ENCODE measurements at regions of chr2 and their contacts with region 1.

Region 1: GRCh38 chr2:223580951-223581350 is 21.2 kb downstream of the SCG2 start:
- DNase-seq: no peak
- ATAC-seq: no peak
- H3K4me3 ChIP-seq: no peak overlapping the region
- H3K27ac ChIP-seq: no peak overlapping the region
- H3K4me1 ChIP-seq: no peaks in the 10 kb centered on the region
- H3K27me3 ChIP-seq: no peaks in the 10 kb centered on the region
- CTCF ChIP-seq: no peak
- EP300 ChIP-seq: no peak
- POLR2A ChIP-seq: no peak
- RAD21 ChIP-seq: no peak

Region 2: GRCh38 chr2:223508372-223508771 is 72.6 kb before region 1 on chr2:
- CTCF ChIA-PET with region 1: no interaction called
- POLR2A ChIA-PET with region 1: no interaction called
- in situ Hi-C with region 1: no loop called
- intact Hi-C with region 1: no loop called
- DNase-seq: no peak
- ATAC-seq: no peak
- H3K4me3 ChIP-seq: no peak overlapping the region
- H3K27ac ChIP-seq: no peak overlapping the region
- H3K4me1 ChIP-seq: no peaks in the 10 kb centered on the region
- H3K27me3 ChIP-seq: 0 out of 5 replicates have a peak, but pooled peaks cover 0 to 4% of the 10 kb centered on the region in 2 experiments
- CTCF ChIP-seq: no peak
- EP300 ChIP-seq: no peak
- POLR2A ChIP-seq: no peak
- RAD21 ChIP-seq: no peak

Region 3: GRCh38 chr2:224869601-224870233 is 1288.8 kb after region 1 on chr2:
- CTCF ChIA-PET with region 1: no interaction called
- POLR2A ChIA-PET with region 1: no interaction called
- in situ Hi-C with region 1: no loop called
- intact Hi-C with region 1: loop called (anchors 5 kb)
- DNase-seq: no peak
- ATAC-seq: no peak
- H3K4me3 ChIP-seq: no peak overlapping the region
- H3K27ac ChIP-seq: no peak overlapping the region
- H3K4me1 ChIP-seq: no peaks in the 10 kb centered on the region
- H3K27me3 ChIP-seq: no peaks in the 10 kb centered on the region
- CTCF ChIP-seq: no peak
- EP300 ChIP-seq: no peak
- POLR2A ChIP-seq: no peak
- RAD21 ChIP-seq: no peak

Measured in HepG2 (cell line).